ENCODE measurements at regions of chr7 and their contacts with region 1.

Region 1: GRCh38 chr7:43585562-43585961 is 2.7 kb downstream of the STK17A start:
- DNase-seq: no peak
- H3K4me3 ChIP-seq: peak overlapping the region; percentile 88
- CTCF ChIP-seq: no peak

Region 2: DNA sequence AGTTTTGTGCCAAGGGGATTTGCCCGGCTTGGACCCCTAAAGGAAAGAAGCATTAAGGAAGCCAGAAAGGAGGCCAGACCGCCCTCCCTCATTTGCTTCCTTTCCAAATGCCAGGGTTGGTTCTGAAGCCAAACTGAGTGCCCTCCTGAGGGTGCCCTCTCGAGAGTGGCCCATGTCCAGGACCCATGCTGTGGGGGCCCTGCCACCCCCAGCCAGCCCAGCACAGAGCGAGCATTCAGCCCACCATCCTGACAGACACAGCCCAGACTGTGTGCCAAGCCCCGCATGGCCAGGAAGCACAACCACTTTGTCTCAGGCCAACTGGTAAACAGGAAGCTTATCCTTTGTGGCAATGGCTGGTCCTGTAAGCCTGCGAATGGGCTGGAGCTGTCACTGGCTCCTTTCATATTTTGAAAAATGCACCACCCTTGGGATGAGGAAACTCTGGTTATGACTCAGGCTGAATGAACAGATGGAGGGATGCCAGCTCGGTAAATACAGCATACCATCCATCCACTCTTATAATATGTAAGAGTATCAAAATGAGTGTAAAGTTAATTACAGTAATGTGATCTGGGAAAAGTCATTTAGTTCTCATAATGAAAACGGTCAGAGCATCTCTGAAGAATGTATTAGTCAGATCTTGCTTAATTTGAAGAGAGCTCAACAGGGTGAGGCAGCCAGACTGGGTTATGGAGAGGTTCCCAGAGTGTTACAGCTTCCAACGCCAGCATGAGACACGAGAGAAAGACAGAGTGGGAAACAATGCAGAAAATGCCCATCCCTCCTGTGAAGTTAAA is 62.3 kb after region 1 on chr7:
- in situ Hi-C with region 1: loop called (anchors 5 kb)
- DNase-seq: peak; percentile 100
- H3K4me3 ChIP-seq: peak overlapping the region; percentile 17
- CTCF ChIP-seq: no peak

Region 3: GRCh38 chr7:43674584-43675436 is 89.2 kb after region 1 on chr7:
- in situ Hi-C with region 1: no loop called
- DNase-seq: peak; percentile 47
- H3K4me3 ChIP-seq: no peak overlapping the region
- CTCF ChIP-seq: no peak

Measured in astrocyte of the cerebellum (primary cell).